Right lobe of liver (tissue), 6 donors: ENCODE measurements at regions of chr19 and their contacts with region 1.

Region 1: GRCh38 chr19:4208385-4209094 is 20.8 kb upstream of the EBI3 start:
- DNase-seq: no peak
- ATAC-seq: peak; percentile 55 to 76 (median 70)
- H3K4me3 ChIP-seq: no peak overlapping the region
- H3K27ac ChIP-seq: no peak overlapping the region
- H3K4me1 ChIP-seq: peaks cover 0 to 4% (median 0%) of the 10 kb centered on the region in 4 donors
- H3K27me3 ChIP-seq: no peaks in the 10 kb centered on the region
- CTCF ChIP-seq: peak; percentile 29 to 60 (median 53)
- POLR2A ChIP-seq: no peak

Region 2: DNA sequence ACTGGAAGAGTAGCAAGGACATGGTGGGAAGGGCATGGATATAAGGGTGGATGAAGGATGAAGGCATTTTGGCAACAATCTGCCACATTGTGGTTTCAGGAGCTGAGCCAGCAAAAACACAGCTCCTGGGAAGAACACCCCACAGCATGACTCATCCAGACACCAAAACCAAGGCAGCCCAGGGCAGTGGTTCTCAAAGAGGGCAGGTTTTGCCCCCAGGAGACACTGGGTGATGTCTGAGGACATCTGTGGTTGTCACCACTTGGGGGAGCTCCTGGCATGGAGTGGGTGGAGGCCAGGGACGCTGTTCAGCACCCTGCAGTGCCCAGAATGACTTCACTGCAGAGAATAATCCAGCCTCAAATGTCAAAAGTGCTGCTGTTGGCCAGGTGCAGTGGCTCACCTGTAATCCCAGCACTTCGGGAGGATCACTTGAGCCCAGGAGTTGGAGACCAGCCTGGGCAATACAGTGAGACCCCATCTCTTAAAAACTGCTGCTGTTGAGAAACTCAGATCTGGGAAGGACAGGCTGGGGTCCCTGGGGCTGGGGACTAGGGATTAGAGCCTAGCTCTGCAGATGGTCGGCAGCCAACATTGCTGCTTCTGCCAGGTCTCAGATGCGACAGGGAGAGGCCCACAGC is 355.8 kb before region 1 on chr19:
- intact Hi-C with region 1: loop called (anchors 5 to 10 kb)
- DNase-seq: peak in 2 of 3 donors; percentile 55 to 62
- ATAC-seq: peak; percentile 62 to 88 (median 70)
- H3K4me3 ChIP-seq: no peak overlapping the region
- H3K27ac ChIP-seq: no peak overlapping the region
- H3K4me1 ChIP-seq: no peaks in the 10 kb centered on the region
- H3K27me3 ChIP-seq: no peaks in the 10 kb centered on the region
- CTCF ChIP-seq: peak; percentile 50 to 55 (median 53)
- POLR2A ChIP-seq: no peak

Region 3: GRCh38 chr19:4007021-4007835 is 201.3 kb before region 1 on chr19 and contains the start of gene PIAS4:
- intact Hi-C with region 1: loop called in 1 of 2 experiments (anchors 10 kb)
- DNase-seq: peak; percentile 96
- ATAC-seq: peak; percentile 84 to 92 (median 90)
- H3K4me3 ChIP-seq: peak within 1 kb of the TSS; percentile 67 to 98 (median 83)
- H3K27ac ChIP-seq: peak within 1 kb of the TSS; percentile 49 to 91 (median 88)
- H3K4me1 ChIP-seq: peaks cover 0 to 34% (median 4%) of the 10 kb centered on the region in 4 donors
- H3K27me3 ChIP-seq: no peaks in the 10 kb centered on the region
- CTCF ChIP-seq: no peak
- POLR2A ChIP-seq: peak; percentile 72
- total RNA-seq, gene PIAS4: 9.9 to 20.0 (median 14.9) TPM